ENCODE measurements at regions of chr16 and their contacts with region 1.

Region 1: GRCh38 chr16:68737046-68737729 is at the start of gene CDH1:
- DNase-seq: peak; percentile 99
- H3K27ac ChIP-seq: peak within 1 kb of the TSS; percentile 32
- CTCF ChIP-seq: no peak

Region 2: DNA sequence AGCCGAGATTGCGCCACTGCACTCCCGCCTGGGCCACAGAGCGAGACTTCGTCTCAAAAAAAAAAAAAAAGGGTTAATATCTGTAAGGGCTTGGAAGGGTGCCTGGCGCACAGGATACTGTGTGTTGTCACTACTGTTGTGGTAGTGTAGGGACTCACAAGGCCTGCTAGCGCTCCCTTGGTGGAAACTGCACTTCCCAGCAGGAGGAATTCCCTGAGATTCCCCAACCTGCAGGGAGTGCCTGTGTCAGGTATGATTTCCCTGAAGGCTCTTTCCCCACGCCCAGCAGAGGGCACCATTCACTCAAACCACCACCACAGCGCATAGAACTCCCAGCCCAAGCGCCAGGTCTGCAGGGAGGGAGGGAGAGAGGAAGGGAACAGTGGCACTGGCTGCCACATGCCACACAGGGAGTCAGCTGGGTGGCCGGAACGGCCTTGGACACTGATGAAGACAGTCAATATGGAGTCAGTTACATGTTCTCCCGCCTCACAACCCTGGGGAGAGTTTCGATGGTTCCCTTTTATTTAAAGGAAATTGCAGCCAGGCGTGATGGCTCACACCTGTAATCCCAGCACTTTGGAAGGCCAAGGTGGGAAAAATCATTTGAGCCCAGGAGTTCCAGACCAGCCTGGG is 32.8 kb before region 1 on chr16:
- CTCF ChIA-PET with region 1: interaction called, 3 read pairs
- POLR2A ChIA-PET with region 1: interaction called, 10 read pairs
- DNase-seq: peak; percentile 69
- H3K27ac ChIP-seq: peak overlapping the region; percentile 98
- CTCF ChIP-seq: peak; percentile 81

Measured in RWPE1 (cell line).